Psoas muscle (tissue), 8 donors: ENCODE measurements at regions of chr3 and their contacts with region 1.

Region 1: DNA sequence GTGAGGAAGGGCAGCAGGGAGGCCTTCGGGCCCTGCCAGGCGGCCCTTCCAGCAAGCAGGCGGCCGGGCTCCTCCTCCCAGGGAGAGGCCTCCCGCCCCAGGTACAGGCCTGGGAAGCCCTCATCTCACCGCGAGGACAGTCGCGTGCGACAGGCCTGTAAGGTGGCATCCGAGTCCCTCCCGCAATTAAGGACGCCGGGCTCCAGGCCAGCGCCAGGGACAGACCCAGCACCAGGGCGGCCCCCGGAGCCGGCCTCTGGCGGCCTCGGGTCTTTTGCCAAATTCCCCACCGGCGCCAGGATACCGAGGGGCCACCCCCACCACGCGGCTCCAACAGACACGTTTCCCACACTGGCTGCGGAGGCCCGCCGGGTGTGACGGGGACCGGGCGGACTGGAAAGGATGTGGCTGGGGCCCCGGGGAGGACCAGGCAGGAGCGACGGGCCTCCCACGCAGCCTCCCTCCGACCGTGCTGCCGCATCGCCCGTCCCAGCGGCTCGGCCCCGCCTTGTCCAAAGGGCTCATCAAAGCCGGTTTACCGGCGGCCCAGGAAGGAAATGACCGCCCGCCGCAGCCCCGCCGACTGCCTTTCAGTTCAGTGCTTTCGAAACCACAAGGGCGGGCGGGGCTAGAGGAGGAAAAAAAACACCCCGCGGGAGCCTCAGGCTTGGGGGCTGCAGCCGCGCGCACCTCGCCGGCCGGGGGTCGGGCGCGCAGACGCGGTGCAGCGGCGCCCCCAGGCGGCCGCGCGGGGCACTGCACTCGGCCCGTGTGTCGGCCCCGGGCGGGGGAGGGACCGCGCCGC is 11.3 kb downstream of the XXYLT1 start:
- DNase-seq: peak; percentile 92 to 95
- ATAC-seq: peak; percentile 88 to 91 (median 90)
- H3K4me3 ChIP-seq: peak overlapping the region; percentile 84
- H3K27ac ChIP-seq: peak overlapping the region; percentile 87
- H3K4me1 ChIP-seq: peaks cover 19% of the 10 kb centered on the region
- H3K27me3 ChIP-seq: no peaks in the 10 kb centered on the region
- CTCF ChIP-seq: peak; percentile 99

Region 2: DNA sequence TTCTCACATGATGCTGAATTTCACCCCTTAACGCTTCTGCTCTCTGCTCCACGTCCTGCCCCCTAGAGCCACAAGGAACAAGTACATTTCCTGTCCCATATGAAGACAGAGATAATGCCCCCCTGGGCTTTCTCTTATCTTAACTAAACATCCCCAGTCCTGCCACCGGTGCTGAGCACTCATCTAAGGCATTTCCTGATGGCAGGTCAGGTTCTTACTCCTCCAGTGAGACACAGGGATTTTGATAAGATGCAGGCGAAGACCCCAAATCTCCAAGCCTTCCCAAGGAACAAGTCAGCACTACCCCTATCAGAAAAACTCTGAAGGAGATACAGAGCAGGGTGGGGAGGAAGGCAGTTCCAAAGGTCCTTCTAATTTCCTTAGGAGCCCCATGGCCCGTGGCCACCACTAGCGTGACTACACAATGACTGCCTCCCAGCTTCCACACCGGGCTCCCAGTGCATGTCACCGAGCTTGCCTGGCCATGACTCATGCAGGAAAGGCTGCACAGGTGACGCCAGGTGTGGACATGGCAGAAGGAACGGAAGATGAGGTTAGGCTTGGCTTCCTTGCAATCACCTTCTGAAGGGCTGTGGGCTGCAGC is 141.6 kb before region 1 on chr3:
- intact Hi-C with region 1: loop called (anchors 10 kb)
- DNase-seq: no peak
- ATAC-seq: no peak
- H3K4me3 ChIP-seq: no peak overlapping the region
- H3K27ac ChIP-seq: no peak overlapping the region
- H3K4me1 ChIP-seq: no peaks in the 10 kb centered on the region
- H3K27me3 ChIP-seq: no peaks in the 10 kb centered on the region
- CTCF ChIP-seq: no peak

Region 3: GRCh38 chr3:195154793-195155535 is 104.7 kb before region 1 on chr3:
- intact Hi-C with region 1: loop called (anchors 5 to 10 kb)
- DNase-seq: peak; percentile 82 to 89
- ATAC-seq: peak; percentile 68 to 85 (median 83)
- H3K4me3 ChIP-seq: peak overlapping the region; percentile 47
- H3K27ac ChIP-seq: peak overlapping the region; percentile 77
- H3K4me1 ChIP-seq: peaks cover 25% of the 10 kb centered on the region
- H3K27me3 ChIP-seq: no peaks in the 10 kb centered on the region
- CTCF ChIP-seq: no peak